ENCODE measurements at regions of chr15 and their contacts with region 1.

Region 1: GRCh38 chr15:56491110-56491722 is 26.3 kb upstream of the MNS1 start:
- DNase-seq: peak; percentile 57 to 72 (median 68)
- H3K4me3 ChIP-seq: no peak overlapping the region
- H3K27ac ChIP-seq: no peak overlapping the region
- H3K4me1 ChIP-seq: no peaks in the 10 kb centered on the region
- H3K27me3 ChIP-seq: no peaks in the 10 kb centered on the region
- CTCF ChIP-seq: peak; percentile 18 to 48 (median 42)
- EP300 ChIP-seq: no peak
- POLR2A ChIP-seq: no peak

Region 2: DNA sequence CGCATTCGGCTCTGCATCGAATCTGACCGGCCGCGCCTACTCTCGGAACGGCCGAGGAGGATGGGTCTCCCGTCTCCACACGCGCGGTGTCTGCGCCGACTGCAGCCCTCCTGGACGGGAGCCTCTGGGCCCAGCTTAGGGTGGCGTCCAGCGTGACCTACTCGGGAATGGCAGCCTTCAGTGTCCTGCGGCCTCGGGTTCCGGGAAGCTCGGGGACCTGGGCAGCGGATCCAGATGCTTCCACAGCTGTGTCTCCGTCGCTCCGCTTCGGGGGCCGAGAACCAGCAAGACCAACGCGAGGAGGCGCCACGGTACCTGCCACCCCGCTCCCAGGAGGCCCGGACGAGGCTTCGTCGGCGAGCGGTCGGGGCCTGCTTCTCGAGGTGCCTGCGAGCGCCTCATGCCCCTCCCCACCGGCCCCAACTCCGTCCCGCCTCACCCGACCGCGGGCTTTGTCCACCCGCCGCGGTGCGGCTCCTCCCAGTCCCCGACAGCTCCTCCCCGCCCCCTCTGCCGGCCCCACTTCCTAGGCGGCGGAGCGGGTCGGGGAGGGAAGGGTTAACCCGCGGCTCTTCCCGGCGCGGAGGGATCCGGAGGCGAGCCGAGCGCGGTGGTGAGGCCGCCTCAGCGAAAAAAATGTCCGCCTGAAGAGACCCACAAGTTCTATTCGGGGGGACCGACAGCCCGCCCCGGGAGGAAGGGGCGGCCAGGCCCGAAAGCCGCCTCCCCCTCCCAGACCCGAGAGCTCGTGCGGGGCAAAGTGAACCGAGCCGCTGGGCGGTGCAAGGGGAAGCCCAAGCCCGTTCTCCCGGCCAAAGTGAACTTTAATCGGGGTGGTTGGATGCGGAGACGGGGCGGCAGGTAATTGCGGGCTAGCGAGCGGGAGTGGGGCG is 427.1 kb after region 1 on chr15 and contains the start of gene TCF12:
- intact Hi-C with region 1: loop called in 1 of 4 experiments (anchors 10 kb)
- DNase-seq: peak; percentile 95 to 97 (median 96)
- H3K4me3 ChIP-seq: peak within 1 kb of the TSS; percentile 96
- H3K27ac ChIP-seq: peak within 1 kb of the TSS; percentile 95 to 97
- H3K4me1 ChIP-seq: peaks cover 4% of the 10 kb centered on the region
- H3K27me3 ChIP-seq: no peaks in the 10 kb centered on the region
- CTCF ChIP-seq: peak in 1 of 3 donors; percentile 28
- EP300 ChIP-seq: no peak
- POLR2A ChIP-seq: peak; percentile 68
- total RNA-seq, gene TCF12: 102 to 150 (median 126) TPM

Region 3: DNA sequence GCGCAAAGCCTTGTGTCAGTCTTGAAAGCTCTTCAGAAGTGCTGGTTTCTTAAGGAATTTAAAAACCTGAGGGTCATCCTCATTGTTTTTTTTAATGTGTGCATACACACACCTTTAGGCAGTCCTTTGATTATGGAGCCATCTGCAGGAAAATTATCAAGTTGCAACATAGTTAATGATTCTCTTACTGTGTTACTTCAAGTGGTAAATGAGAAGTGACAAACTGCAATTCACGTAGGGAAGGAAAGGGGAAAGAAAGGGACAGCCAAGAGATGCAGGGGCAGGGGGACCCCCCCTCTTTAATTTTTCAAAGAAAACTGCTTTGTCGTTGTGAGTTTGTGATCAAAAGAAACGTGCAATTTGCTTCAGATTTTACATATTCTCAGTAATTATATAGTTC is 722.6 kb after region 1 on chr15:
- intact Hi-C with region 1: loop called in 1 of 4 experiments (anchors 10 kb)
- DNase-seq: no peak
- H3K4me3 ChIP-seq: no peak overlapping the region
- H3K27ac ChIP-seq: no peak overlapping the region
- H3K4me1 ChIP-seq: peaks cover 1% of the 10 kb centered on the region
- H3K27me3 ChIP-seq: no peaks in the 10 kb centered on the region
- CTCF ChIP-seq: peak; percentile 17 to 50 (median 41)
- EP300 ChIP-seq: no peak
- POLR2A ChIP-seq: no peak

Region 4: DNA sequence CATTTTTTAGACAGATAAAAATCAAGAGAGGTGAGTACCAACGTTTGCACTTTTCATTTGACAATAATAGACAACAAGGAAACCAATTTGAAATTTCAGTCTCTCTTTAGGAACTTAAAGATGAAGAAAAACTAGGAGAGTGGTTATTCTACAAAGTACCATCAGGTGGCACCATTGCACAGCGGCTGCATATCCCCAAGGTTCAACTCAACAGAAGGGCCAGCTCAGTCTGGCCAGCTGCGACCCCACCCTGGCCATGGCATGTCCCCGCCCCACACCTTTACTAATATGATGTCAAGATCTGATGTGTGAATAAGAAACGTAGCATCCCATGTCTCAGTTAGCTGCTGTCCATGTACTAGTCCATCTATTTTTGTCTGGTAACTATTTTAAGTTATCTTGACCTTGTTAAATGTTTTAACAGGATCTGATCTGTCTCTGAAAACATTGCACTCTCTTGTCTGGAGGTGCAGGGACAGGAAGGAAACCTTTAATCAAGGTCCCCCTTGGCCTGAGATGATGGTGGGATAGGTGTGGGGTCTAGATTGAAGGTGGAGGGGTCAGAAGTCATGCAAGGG is 849.6 kb after region 1 on chr15:
- intact Hi-C with region 1: loop called in 1 of 4 experiments (anchors 10 kb)
- DNase-seq: peak; percentile 40 to 64 (median 55)
- H3K4me3 ChIP-seq: no peak overlapping the region
- H3K27ac ChIP-seq: no peak overlapping the region
- H3K4me1 ChIP-seq: no peaks in the 10 kb centered on the region
- H3K27me3 ChIP-seq: no peaks in the 10 kb centered on the region
- CTCF ChIP-seq: peak; percentile 84 to 85 (median 84)
- EP300 ChIP-seq: no peak
- POLR2A ChIP-seq: no peak

Region 5: DNA sequence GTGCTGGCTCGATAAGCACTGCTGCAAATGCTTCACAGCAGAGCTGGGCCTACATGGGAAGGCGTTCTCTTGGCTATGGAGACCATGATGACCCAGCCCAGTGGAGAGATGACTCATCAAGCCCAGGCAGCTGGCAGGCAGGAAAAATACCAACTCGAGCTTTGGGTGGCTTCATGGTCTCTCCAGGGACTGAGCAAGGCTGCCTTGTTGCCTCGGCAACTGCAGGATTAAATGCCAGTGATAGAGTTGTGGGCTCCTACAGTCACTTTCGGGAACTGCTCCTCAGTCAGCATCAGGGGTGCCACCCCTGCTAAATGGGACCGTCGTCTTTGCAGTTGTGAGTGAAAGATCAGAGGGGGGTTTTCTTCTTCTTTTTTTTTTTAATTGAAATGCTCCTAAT is 1045.9 kb after region 1 on chr15:
- intact Hi-C with region 1: loop called in 2 of 4 experiments (anchors 5 to 10 kb)
- DNase-seq: peak in 1 of 5 donors; percentile 42
- H3K4me3 ChIP-seq: no peak overlapping the region
- H3K27ac ChIP-seq: no peak overlapping the region
- H3K4me1 ChIP-seq: no peaks in the 10 kb centered on the region
- H3K27me3 ChIP-seq: no peaks in the 10 kb centered on the region
- CTCF ChIP-seq: no peak
- EP300 ChIP-seq: no peak
- POLR2A ChIP-seq: no peak

Measured in ovary (tissue), 10 donors.